ENCODE measurements at regions of chr12 and their contacts with region 1.

Region 1: GRCh38 chr12:120971299-120972179 is 6.8 kb upstream of the HNF1A start:
- DNase-seq: no peak
- ATAC-seq: peak; percentile 82 to 83
- H3K4me3 ChIP-seq: no peak overlapping the region
- H3K27ac ChIP-seq: no peak overlapping the region
- H3K4me1 ChIP-seq: no peaks in the 10 kb centered on the region
- H3K27me3 ChIP-seq: no peaks in the 10 kb centered on the region

Region 2: GRCh38 chr12:120640840-120641833 is 330.4 kb before region 1 on chr12:
- intact Hi-C with region 1: loop called in 3 of 4 experiments (anchors 5 to 10 kb)
- DNase-seq: peak; percentile 60 to 83 (median 79)
- ATAC-seq: peak; percentile 87 to 88
- H3K4me3 ChIP-seq: peak overlapping the region; percentile 94
- H3K27ac ChIP-seq: no peak overlapping the region
- H3K4me1 ChIP-seq: no peaks in the 10 kb centered on the region
- H3K27me3 ChIP-seq: no peaks in the 10 kb centered on the region

Region 3: DNA sequence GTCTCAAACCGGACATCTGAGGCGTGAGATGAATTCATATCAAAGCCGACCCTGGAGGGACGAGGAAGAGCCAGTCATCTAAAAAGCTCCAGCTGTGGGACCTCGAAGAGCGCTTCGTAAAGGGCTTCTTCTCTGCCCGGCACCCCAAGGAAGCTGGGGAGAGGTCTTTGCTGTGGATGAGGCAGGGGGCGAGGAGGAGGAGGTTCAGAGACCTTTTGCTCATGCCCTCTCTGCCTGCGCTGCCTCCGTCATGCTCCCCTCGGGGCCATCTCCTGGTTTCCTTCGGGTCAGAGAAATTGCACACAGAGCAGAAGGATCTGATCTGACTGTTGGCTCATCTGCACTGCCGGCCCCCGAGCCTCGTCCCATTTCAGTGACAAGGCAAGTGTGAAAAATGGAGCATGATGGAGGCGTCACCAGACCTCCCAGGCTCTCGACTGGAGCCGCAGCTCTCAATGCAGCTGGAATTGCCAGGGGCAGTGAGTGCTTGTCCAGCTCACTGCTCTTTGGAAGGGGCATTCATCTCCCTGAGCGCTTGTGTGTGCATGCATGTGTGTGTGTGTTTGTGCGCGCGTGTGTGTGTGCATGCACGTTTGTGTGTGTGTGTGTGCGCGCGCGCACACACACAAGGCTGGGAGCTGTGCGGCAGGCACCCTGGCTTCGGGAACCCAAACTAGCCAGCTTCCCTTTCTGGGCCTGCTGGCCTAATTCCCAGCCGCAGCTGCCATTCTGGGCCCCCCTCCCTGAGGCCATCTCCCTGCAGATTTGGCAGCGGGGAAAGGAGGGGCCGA is 321.9 kb before region 1 on chr12:
- intact Hi-C with region 1: loop called in 3 of 4 experiments (anchors 5 to 10 kb)
- DNase-seq: peak in 2 of 3 donors; percentile 81 to 84
- ATAC-seq: peak in 1 of 2 donors; percentile 3
- H3K4me3 ChIP-seq: peak overlapping the region; percentile 59
- H3K27ac ChIP-seq: no peak overlapping the region
- H3K4me1 ChIP-seq: peaks cover 14% of the 10 kb centered on the region
- H3K27me3 ChIP-seq: no peaks in the 10 kb centered on the region

Region 4: DNA sequence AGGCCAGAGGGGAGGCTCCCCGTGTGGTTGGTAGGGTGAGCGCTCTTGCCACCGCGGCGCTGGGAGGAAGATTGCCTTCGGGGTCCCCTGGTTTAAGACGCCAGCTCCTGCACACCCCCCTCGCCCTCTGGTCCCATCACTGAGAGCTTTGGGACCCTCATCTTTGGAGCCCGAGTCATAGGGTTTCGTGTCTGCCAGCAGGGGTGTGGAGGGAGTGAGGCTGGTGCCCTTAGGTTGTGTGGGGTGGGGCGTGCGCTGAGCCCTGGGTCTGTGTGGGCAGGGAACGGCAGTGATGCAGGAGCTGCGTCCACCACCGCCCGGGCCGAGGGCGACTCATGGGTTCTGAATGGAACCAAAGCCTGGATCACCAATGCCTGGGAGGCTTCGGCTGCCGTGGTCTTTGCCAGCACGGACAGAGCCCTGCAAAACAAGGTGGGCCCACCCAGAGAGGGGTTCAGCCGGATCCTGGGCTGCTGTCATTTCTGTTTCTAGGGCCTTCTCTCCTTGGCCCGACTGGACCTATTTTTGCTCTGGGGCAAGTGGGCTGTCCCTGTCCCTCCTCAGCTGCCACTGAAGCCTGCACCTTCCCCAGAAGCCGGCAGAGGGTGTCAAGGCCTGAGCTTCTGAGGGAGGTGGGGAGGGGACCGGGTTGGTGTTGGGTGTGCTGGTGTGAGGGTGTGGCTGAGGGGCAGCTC is 233.8 kb before region 1 on chr12:
- intact Hi-C with region 1: loop called in 1 of 4 experiments (anchors 10 kb)
- DNase-seq: no peak
- ATAC-seq: peak in 1 of 2 donors; percentile 37
- H3K4me3 ChIP-seq: no peak overlapping the region
- H3K27ac ChIP-seq: no peak overlapping the region
- H3K4me1 ChIP-seq: no peaks in the 10 kb centered on the region
- H3K27me3 ChIP-seq: no peaks in the 10 kb centered on the region

Region 5: GRCh38 chr12:121033625-121034349 is 62.2 kb after region 1 on chr12:
- intact Hi-C with region 1: no loop called
- DNase-seq: no peak
- ATAC-seq: no peak
- H3K4me3 ChIP-seq: no peak overlapping the region
- H3K27ac ChIP-seq: no peak overlapping the region
- H3K4me1 ChIP-seq: no peaks in the 10 kb centered on the region
- H3K27me3 ChIP-seq: no peaks in the 10 kb centered on the region

Region 6: GRCh38 chr12:121159467-121160307 is 188.1 kb after region 1 on chr12:
- intact Hi-C with region 1: no loop called
- DNase-seq: no peak
- ATAC-seq: no peak
- H3K4me3 ChIP-seq: no peak overlapping the region
- H3K27ac ChIP-seq: no peak overlapping the region
- H3K4me1 ChIP-seq: no peaks in the 10 kb centered on the region
- H3K27me3 ChIP-seq: no peaks in the 10 kb centered on the region

Measured in right cardiac atrium (tissue), 5 donors.